Activated T-helper 1 cell treated with anti-CD3 and anti-CD28 coated beads, Interleukin-12 subunit alpha, Interleukin-12 subunit beta, Interleukin-2, Interleukin-4 antibody, amounts not matched to agents 30 ng/mL and 10 ng/mL and 1 ng/mL, durations not matched to agents 14 hours and 24 hours and 36 hours (primary cell): ENCODE measurements at regions of chr7 and their contacts with region 1.

Region 1: GRCh38 chr7:17298207-17298839 is at the start of gene AHR:
- DNase-seq: peak; percentile 62
- H3K4me3 Mint-ChIP-seq: peak within 1 kb of the TSS; percentile 92
- H3K27ac Mint-ChIP-seq: peak within 1 kb of the TSS; percentile 94
- H3K4me1 Mint-ChIP-seq: peaks cover 15% of the 10 kb centered on the region
- H3K27me3 Mint-ChIP-seq: no peaks in the 10 kb centered on the region
- total RNA-seq, gene AHR: 25.3 and 29.1 TPM in 2 replicates

Region 2: DNA sequence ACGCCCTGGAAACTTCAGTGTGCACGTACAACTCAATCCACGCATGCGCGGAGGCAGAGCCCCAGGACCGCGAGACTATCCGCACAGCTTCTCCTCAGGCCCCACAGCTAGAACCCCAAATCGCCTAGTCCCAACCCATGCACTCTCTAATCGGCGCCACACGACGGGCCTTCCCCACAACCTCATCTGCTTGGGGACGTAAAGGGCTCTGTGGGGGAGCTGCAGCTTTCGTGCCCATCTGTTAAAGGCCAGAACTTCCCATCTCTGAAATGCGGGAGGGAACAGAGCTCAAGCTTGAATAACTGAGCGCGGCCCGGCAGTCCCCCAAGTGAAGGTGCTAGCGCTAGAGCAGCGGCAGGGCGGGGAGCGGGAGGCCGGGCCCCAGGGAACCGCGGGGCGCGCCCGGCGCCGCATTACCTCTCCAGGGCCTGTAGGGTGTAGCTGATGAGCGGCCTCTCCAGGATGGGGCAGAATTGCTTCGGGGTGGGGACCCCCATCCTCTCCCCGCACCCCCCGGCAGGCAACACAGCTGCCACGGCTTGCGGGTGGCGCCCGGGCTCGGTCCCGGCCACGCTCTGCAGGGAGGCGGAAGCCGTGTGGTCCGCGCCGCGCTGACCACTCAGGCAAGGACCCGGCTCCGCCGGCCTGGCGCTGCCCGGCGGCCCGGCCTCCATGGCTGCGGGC is 877.5 kb before region 1 on chr7:
- intact Hi-C with region 1: loop called (anchors 2 kb)
- DNase-seq: peak; percentile 80
- H3K4me3 Mint-ChIP-seq: peak overlapping the region; percentile 87
- H3K27ac Mint-ChIP-seq: peak overlapping the region; percentile 82
- H3K4me1 Mint-ChIP-seq: peaks cover 22% of the 10 kb centered on the region
- H3K27me3 Mint-ChIP-seq: no peaks in the 10 kb centered on the region

Region 3: GRCh38 chr7:16926283-16926682 is 372.0 kb before region 1 on chr7:
- intact Hi-C with region 1: loop called (anchors 5 kb)
- DNase-seq: no peak
- H3K4me3 Mint-ChIP-seq: no peak overlapping the region
- H3K27ac Mint-ChIP-seq: no peak overlapping the region
- H3K4me1 Mint-ChIP-seq: peaks cover 49% of the 10 kb centered on the region
- H3K27me3 Mint-ChIP-seq: no peaks in the 10 kb centered on the region

Region 4: DNA sequence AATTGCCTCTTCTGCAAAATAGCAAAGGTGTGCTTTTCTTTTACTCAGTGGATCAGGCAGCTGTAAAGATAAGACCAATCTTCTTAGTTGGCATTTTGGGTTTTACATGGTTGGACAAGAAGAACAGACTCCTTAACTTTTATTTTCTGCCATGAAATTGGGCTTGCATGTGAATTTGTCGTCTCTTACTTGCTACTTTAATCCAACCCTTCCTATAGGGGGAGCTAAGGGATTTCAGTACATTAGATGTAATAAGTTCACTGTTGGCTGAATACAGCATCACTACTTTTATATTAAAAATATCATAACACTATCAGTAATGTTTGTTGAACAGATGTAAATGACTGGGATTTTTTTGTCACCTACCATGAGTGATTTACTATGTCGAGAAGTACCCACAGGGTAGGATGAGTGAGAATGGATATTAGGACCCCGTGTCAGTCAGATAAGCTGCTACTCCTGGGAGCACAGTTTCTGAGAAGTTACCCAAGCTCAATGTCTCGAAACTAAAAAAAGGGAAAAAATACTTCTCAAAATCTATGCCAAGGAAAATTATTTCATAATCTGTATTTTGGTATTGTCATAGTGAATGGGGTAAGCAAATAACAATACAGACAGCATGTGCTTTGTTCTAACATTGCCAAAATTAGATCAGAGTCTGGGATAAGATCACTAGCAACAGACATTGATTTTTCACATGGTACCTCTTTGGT is 289.2 kb before region 1 on chr7:
- intact Hi-C with region 1: loop called (anchors 2 kb)
- DNase-seq: no peak
- H3K4me3 Mint-ChIP-seq: no peak overlapping the region
- H3K27ac Mint-ChIP-seq: no peak overlapping the region
- H3K4me1 Mint-ChIP-seq: peaks cover 18% of the 10 kb centered on the region
- H3K27me3 Mint-ChIP-seq: peaks cover 14% of the 10 kb centered on the region

Region 5: DNA sequence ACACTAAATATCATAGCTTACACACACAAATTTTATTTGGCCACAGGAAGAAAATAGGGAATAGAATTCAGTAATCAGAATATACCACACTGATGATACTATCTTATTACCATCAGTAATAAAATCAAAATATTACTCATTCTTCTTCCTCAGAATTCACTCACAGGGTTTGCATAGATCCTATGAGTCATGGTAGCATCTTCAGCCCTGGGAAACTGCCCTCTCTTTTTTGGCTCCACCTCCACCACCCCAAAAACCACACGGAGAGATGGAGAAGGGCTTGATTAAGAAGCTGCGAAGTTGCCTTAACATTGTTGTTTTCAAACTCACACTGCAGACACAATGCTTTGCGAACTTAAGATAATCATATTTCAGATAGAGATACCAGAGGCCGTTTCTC is 154.0 kb before region 1 on chr7:
- intact Hi-C with region 1: loop called (anchors 1 kb)
- DNase-seq: peak; percentile 49
- H3K4me3 Mint-ChIP-seq: peak overlapping the region; percentile 1
- H3K27ac Mint-ChIP-seq: peak overlapping the region; percentile 25
- H3K4me1 Mint-ChIP-seq: peaks cover 46% of the 10 kb centered on the region
- H3K27me3 Mint-ChIP-seq: no peaks in the 10 kb centered on the region

Region 6: GRCh38 chr7:17255926-17256325 is 42.4 kb before region 1 on chr7:
- intact Hi-C with region 1: loop called (anchors 1 kb)
- DNase-seq: no peak
- H3K4me3 Mint-ChIP-seq: no peak overlapping the region
- H3K27ac Mint-ChIP-seq: no peak overlapping the region
- H3K4me1 Mint-ChIP-seq: peaks cover 12% of the 10 kb centered on the region
- H3K27me3 Mint-ChIP-seq: no peaks in the 10 kb centered on the region

Region 7: GRCh38 chr7:17512181-17512675 is 213.9 kb after region 1 on chr7:
- intact Hi-C with region 1: no loop called
- DNase-seq: no peak
- H3K4me3 Mint-ChIP-seq: no peak overlapping the region
- H3K27ac Mint-ChIP-seq: no peak overlapping the region
- H3K4me1 Mint-ChIP-seq: no peaks in the 10 kb centered on the region
- H3K27me3 Mint-ChIP-seq: peaks cover 3% of the 10 kb centered on the region

Region 8: GRCh38 chr7:17940302-17940883 is 642.1 kb after region 1 on chr7 and contains the start of gene SNX13:
- intact Hi-C with region 1: loop called (anchors 10 kb)
- DNase-seq: peak; percentile 86
- H3K4me3 Mint-ChIP-seq: peak within 1 kb of the TSS; percentile 92
- H3K27ac Mint-ChIP-seq: peak within 1 kb of the TSS; percentile 93
- H3K4me1 Mint-ChIP-seq: peaks cover 36% of the 10 kb centered on the region
- H3K27me3 Mint-ChIP-seq: peaks cover 7% of the 10 kb centered on the region
- total RNA-seq, gene SNX13: 27.3 and 27.6 TPM in 2 replicates